WTC11 (cell line): ENCODE measurements at regions of chr17 and their contacts with region 1.

Region 1: GRCh38 chr17:47649153-47649971 is at the start of gene KPNB1:
- DNase-seq: peak; percentile 99
- ATAC-seq: peak; percentile 91
- H3K4me3 Mint-ChIP-seq: peak within 1 kb of the TSS; percentile 91
- H3K27ac Mint-ChIP-seq: peak within 1 kb of the TSS; percentile 100
- H3K4me1 Mint-ChIP-seq: peaks cover 28% of the 10 kb centered on the region
- H3K27me3 Mint-ChIP-seq: no peaks in the 10 kb centered on the region; the same call in 1 of the 2 replicates
- CTCF ChIP-seq: no peak
- total RNA-seq, gene KPNB1: 437 to 506 TPM (median 452 TPM) in 3 replicates

Region 2: GRCh38 chr17:47253541-47254402 is 395.6 kb before region 1 on chr17 and contains the start of gene ITGB3:
- CTCF ChIA-PET with region 1: no interaction called
- POLR2A ChIA-PET with region 1: no interaction called
- DNase-seq: peak; percentile 81
- ATAC-seq: peak; percentile 88
- H3K4me3 Mint-ChIP-seq: peak within 1 kb of the TSS; percentile 99
- H3K27ac Mint-ChIP-seq: no peak within 1 kb of the TSS
- H3K4me1 Mint-ChIP-seq: peaks cover 50% of the 10 kb centered on the region
- H3K27me3 Mint-ChIP-seq: peaks cover 61% of the 10 kb centered on the region
- CTCF ChIP-seq: no peak
- total RNA-seq, gene ITGB3: 0.04 to 0.14 TPM (median 0.09 TPM) in 3 replicates

Region 3: GRCh38 chr17:47615766-47616424 is 33.5 kb before region 1 on chr17:
- CTCF ChIA-PET with region 1: interaction called, 18 read pairs
- POLR2A ChIA-PET with region 1: interaction called, 3 read pairs
- DNase-seq: no peak
- ATAC-seq: no peak
- H3K4me3 Mint-ChIP-seq: no peak overlapping the region
- H3K27ac Mint-ChIP-seq: no peak overlapping the region
- H3K4me1 Mint-ChIP-seq: no peaks in the 10 kb centered on the region
- H3K27me3 Mint-ChIP-seq: no peaks in the 10 kb centered on the region
- CTCF ChIP-seq: peak; percentile 49